Activated CD4-positive, alpha-beta T cell treated with anti-CD3 and anti-CD28 coated beads, Interleukin-2, amount 10 ng/mL, durations not matched to agents 24 days and 14 days (primary cell): ENCODE measurements at regions of chr7 and their contacts with region 1.

Region 1: DNA sequence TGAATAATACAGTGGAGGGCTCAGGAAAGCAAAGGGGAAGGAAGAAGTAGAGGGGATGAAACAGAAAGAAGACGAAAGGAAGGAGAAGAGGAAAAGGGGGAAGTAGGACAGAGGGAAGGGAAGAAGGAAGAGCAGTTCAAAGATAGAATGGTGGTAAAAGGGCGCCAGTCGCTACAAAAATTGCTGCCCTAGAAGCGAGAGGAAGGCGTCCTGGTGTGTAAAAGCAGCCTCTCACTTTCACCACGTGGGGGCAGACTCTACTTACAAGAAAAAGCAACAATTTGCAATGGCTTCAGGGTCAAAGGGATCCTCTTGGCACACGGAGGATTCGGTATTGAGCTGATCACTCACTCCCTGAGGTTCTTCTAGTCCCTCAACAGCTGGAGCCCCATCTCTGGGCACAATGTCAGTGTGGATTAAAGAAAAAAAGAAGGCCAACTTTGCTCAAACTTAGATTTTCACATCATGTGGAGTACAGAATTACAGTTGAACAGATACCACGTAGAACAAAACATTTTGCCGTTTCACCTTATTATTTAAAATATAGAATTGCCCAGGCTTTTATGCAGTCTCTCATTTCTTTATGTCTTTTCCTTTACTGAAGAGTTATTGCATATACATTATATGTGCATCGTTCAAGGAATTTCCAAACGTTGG is 31.4 kb upstream of the NPVF start:
- DNase-seq: peak; percentile 88
- H3K4me3 Mint-ChIP-seq: no peak overlapping the region
- H3K27ac Mint-ChIP-seq: no peak overlapping the region
- H3K4me1 Mint-ChIP-seq: peaks cover 16% of the 10 kb centered on the region
- H3K27me3 Mint-ChIP-seq: peaks cover 17% of the 10 kb centered on the region

Region 2: DNA sequence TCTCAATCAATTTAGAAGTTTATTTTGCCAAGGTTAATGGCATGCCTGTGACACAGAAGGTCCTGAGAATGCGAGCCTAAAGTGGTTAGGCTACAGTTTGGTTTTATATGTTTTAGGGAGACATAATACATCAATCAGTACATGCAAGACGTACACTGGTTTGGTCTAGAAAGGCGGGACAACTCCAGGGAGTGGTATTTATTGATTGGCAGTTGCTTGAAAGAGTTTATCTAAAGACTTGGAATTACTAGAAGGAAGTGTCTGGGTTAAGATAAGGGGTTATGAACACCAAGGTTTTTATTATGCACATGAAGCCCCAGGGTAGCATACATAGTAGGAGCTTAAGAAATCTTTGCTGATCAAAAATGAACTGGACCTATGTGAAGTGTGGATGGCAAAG is 53.0 kb before region 1 on chr7:
- intact Hi-C with region 1: no loop called
- DNase-seq: no peak
- H3K4me3 Mint-ChIP-seq: no peak overlapping the region
- H3K27ac Mint-ChIP-seq: no peak overlapping the region
- H3K4me1 Mint-ChIP-seq: no peaks in the 10 kb centered on the region
- H3K27me3 Mint-ChIP-seq: peaks cover 26% of the 10 kb centered on the region

Region 3: DNA sequence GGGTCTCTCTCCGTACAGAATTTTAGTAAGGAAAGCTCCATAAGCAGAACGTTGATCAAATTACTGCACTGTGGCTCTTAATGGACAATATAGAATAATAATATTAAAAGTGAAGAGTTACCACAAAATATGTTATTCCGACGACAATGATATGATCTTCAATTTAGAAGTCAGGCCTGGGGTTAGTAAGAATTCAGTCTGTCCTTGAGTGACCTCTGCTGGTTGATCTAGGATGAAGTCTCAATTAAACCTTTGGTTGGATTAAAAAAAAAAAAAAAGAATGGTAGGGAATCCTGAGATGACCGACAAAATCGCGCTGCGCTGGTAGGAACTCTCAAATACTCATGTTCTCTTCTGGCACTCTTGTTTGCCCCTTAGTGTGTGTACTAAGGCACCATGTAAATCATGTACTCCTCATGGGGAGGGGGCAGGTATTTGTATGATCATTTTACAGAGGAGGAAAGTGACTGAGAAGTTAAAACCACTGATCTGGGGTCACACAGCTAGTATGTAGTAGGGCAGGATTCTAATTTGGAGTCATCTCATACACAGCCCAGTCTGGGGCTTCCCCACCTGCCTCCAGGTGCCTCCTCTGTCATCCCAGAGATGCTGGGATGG is 129.9 kb after region 1 on chr7:
- intact Hi-C with region 1: loop called (anchors 1 kb)
- DNase-seq: peak; percentile 69
- H3K4me3 Mint-ChIP-seq: no peak overlapping the region
- H3K27ac Mint-ChIP-seq: no peak overlapping the region
- H3K4me1 Mint-ChIP-seq: no peaks in the 10 kb centered on the region
- H3K27me3 Mint-ChIP-seq: peaks cover 12% of the 10 kb centered on the region

Region 4: GRCh38 chr7:25565949-25566348 is 306.2 kb after region 1 on chr7:
- intact Hi-C with region 1: loop called (anchors 1 kb)
- DNase-seq: peak; percentile 90
- H3K4me3 Mint-ChIP-seq: peak overlapping the region; percentile 53
- H3K27ac Mint-ChIP-seq: no peak overlapping the region
- H3K4me1 Mint-ChIP-seq: peaks cover 6% of the 10 kb centered on the region
- H3K27me3 Mint-ChIP-seq: peaks cover 2% of the 10 kb centered on the region

Region 5: DNA sequence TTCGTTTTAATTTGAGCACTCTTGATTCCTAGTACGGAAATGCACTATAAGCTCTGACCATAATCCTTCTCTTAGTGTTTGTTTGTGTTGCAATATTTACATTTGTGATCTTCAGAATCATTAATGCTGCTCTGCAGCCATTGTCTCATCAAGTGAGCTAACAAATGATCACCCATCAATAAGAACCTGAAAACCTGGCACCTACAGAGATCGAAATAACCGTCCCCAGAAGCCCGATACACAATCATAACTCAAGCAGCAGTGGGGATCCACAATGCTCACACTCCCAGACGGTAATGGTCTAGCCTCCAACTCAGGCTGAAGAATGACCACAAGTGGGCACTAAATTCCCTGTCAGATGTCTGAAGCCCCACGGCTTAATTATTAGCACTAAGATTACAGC is 736.3 kb after region 1 on chr7:
- intact Hi-C with region 1: no loop called
- DNase-seq: no peak
- H3K4me3 Mint-ChIP-seq: no peak overlapping the region
- H3K27ac Mint-ChIP-seq: no peak overlapping the region
- H3K4me1 Mint-ChIP-seq: no peaks in the 10 kb centered on the region
- H3K27me3 Mint-ChIP-seq: peaks cover 22% of the 10 kb centered on the region